ENCODE measurements at regions of chr16 and their contacts with region 1.

Region 1: DNA sequence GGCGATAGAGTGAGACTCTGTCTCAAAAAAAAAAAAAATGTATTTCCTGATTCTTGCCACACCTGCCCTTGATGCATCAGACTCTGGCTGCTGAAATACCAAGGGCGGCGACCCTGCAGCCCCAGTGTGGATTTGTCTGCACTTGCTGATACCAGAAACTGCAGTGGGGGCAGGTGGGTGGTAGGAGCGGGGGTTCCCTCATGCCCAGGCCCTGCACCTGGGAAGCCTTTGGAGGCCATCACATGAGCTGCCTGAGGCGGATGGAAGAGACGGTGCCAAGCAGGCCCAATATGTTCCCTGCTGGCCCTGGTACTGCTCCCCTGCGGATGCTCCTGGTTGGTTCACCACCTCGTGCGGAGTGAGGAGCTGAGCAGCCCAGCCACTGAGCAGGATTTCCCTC is 50.6 kb downstream of the MARF1 start:
- DNase-seq: peak in 3 of 5 donors; percentile 7 to 48 (median 23)
- H3K4me3 ChIP-seq: no peak overlapping the region
- H3K4me3 Mint-ChIP-seq: peak overlapping the region in 2 of 8 donors; percentile 6 to 26
- H3K27ac ChIP-seq: no peak overlapping the region
- H3K27ac Mint-ChIP-seq: peak overlapping the region; percentile 57 to 93 (median 79)
- H3K4me1 ChIP-seq: peaks cover 37% of the 10 kb centered on the region
- H3K4me1 Mint-ChIP-seq: peaks cover 16 to 58% (median 36%) of the 10 kb centered on the region in 4 donors
- H3K27me3 ChIP-seq: no peaks in the 10 kb centered on the region
- H3K27me3 Mint-ChIP-seq: no peaks in the 10 kb centered on the region

Region 2: DNA sequence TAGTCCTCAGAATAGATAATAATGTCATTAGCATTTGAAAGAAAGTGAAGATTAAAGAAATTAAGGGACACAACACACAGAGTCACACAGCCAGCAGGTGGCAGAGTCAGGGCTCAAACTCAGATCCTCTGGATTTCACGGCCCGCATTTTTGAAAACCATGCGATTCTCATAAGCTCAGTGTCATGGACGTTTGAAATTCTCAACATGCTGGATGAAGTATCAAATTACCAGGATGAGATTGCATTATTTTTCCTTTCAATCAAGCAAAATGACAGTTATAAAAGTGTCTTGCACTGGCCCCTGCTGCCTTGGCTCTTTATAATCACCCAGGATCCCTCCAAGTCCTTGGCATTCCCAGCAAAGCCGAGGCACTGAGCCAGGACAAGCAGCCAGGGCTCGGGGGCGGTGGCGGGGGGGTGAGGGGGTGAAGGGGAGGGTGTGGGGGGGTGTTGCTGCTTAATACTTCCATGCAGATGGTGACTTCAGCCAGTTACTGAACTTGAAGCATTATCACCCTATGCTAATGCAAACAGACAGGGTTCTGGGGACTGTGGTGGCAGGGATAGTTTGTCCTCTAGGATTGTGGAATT is 164.6 kb before region 1 on chr16:
- CTCF ChIA-PET with region 1: interaction called, 6 read pairs
- POLR2A ChIA-PET with region 1: no interaction called
- intact Hi-C with region 1: loop called (anchors 5 kb)
- DNase-seq: peak; percentile 27 to 53 (median 40)
- H3K4me3 ChIP-seq: no peak overlapping the region
- H3K4me3 Mint-ChIP-seq: no peak overlapping the region
- H3K27ac ChIP-seq: no peak overlapping the region
- H3K27ac Mint-ChIP-seq: peak overlapping the region in 1 of 7 donors; percentile 56
- H3K4me1 ChIP-seq: no peaks in the 10 kb centered on the region
- H3K4me1 Mint-ChIP-seq: peaks cover 0 to 3% (median under 1%) of the 10 kb centered on the region in 4 donors
- H3K27me3 ChIP-seq: no peaks in the 10 kb centered on the region
- H3K27me3 Mint-ChIP-seq: peaks cover 6 to 7% of the 10 kb centered on the region in 2 donors

Region 3: GRCh38 chr16:15523092-15523541 is 69.2 kb before region 1 on chr16:
- CTCF ChIA-PET with region 1: no interaction called
- POLR2A ChIA-PET with region 1: no interaction called
- intact Hi-C with region 1: loop called (anchors 10 kb)
- DNase-seq: peak in 1 of 5 donors; percentile 4
- H3K4me3 ChIP-seq: no peak overlapping the region
- H3K4me3 Mint-ChIP-seq: peak overlapping the region in 7 of 8 donors; percentile 41 to 78 (median 58)
- H3K27ac ChIP-seq: no peak overlapping the region
- H3K27ac Mint-ChIP-seq: peak overlapping the region in 5 of 7 donors; percentile 68 to 86 (median 84)
- H3K4me1 ChIP-seq: peaks cover 15% of the 10 kb centered on the region
- H3K4me1 Mint-ChIP-seq: peaks cover 10 to 19% (median 13%) of the 10 kb centered on the region in 4 donors
- H3K27me3 ChIP-seq: no peaks in the 10 kb centered on the region
- H3K27me3 Mint-ChIP-seq: no peaks in the 10 kb centered on the region

Region 4: DNA sequence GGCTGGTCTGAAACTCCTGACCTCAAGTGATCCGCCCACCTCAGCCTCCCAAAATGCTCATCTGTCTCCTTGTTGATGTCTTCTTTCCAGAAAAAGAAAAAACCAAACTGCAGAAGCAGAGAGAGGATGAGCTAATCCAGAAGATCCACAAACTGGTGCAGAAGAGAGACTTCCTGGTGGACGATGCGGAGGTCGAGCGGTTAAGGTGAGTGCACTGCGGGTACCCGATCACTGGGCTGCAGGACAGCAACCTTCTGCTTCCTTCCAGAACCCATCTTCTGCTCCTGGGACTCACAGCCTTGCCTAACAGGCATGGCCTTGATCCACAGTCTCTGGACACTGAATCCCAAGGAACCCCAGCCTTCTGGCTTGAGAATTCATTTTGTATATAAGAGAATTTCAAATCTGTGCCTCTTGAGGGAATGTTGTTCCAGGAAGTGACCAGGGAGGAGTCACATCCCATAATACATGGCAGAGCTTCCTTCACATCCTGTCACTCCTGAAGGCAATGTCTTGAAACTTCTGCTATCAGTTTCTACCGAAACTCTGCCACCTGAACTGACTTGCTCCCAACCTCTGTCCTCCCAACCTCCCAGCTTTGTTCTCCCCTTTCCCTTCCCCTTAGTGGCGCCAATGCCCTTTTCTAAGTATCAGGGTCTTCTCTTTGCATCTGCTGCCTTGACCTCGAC is 11.1 kb before region 1 on chr16:
- CTCF ChIA-PET with region 1: no interaction called
- POLR2A ChIA-PET with region 1: interaction called, 13 read pairs
- intact Hi-C with region 1: no loop called
- DNase-seq: no peak
- H3K4me3 ChIP-seq: no peak overlapping the region
- H3K4me3 Mint-ChIP-seq: no peak overlapping the region
- H3K27ac ChIP-seq: no peak overlapping the region
- H3K27ac Mint-ChIP-seq: peak overlapping the region in 4 of 7 donors; percentile 4 to 55 (median 18)
- H3K4me1 ChIP-seq: no peaks in the 10 kb centered on the region
- H3K4me1 Mint-ChIP-seq: peaks cover 0 to 6% (median 4%) of the 10 kb centered on the region in 4 donors
- H3K27me3 ChIP-seq: no peaks in the 10 kb centered on the region
- H3K27me3 Mint-ChIP-seq: no peaks in the 10 kb centered on the region

Region 5: GRCh38 chr16:15636392-15636873 is 44.1 kb after region 1 on chr16:
- CTCF ChIA-PET with region 1: interaction called, 14 read pairs
- POLR2A ChIA-PET with region 1: interaction called, 71 read pairs
- intact Hi-C with region 1: loop called (anchors 2 kb)
- DNase-seq: peak in 4 of 5 donors; percentile 29 to 45 (median 31)
- H3K4me3 ChIP-seq: no peak overlapping the region
- H3K4me3 Mint-ChIP-seq: peak overlapping the region; percentile 42 to 84 (median 76)
- H3K27ac ChIP-seq: peak overlapping the region; percentile 39
- H3K27ac Mint-ChIP-seq: peak overlapping the region; percentile 88 to 98 (median 93)
- H3K4me1 ChIP-seq: peaks cover 66% of the 10 kb centered on the region
- H3K4me1 Mint-ChIP-seq: peaks cover 39 to 84% (median 61%) of the 10 kb centered on the region in 4 donors
- H3K27me3 ChIP-seq: no peaks in the 10 kb centered on the region
- H3K27me3 Mint-ChIP-seq: no peaks in the 10 kb centered on the region

Region 6: DNA sequence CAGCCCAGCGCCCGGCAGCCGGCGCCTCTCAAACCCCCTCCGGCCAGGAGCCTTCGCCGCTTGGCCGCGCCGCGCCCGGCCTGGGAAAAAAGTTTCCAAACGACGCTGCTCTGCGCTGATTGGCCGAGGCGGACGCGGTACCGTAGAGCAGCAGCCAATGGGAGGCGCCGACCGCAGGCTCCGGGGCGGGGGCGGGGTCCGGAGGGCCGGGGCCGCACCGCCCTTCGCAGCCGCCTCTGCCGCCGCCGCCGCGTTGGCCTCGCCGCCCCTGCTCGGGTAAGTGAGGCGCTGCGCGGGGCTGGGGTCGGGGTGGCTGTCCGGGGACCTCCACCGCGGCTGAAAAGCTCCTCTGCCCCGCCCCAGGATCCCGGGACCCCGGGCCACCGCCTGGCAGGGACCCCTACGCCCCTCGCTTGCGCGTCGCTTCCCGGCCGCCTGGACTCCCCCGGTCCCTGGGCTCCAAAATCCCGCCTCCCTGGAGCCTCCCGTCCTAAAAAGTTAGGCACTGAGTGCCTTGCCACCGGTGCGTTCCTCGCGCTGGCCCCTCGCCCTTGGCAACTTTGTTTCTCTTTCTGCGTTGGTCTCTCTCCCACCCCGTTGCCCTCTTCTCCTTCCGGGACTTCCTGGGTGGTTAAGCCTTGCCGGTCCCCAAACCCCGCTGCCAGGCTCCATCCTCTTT is 57.8 kb after region 1 on chr16 and contains the start of gene NDE1:
- CTCF ChIA-PET with region 1: no interaction called
- POLR2A ChIA-PET with region 1: interaction called, 71 read pairs
- intact Hi-C with region 1: no loop called
- DNase-seq: peak; percentile 76 to 87 (median 79)
- H3K4me3 ChIP-seq: peak within 1 kb of the TSS; percentile 76 to 88
- H3K4me3 Mint-ChIP-seq: peak within 1 kb of the TSS; percentile 97 to 100 (median 99)
- H3K27ac ChIP-seq: peak within 1 kb of the TSS; percentile 98
- H3K27ac Mint-ChIP-seq: peak within 1 kb of the TSS; percentile 98 to 100 (median 99)
- H3K4me1 ChIP-seq: peaks cover 48% of the 10 kb centered on the region
- H3K4me1 Mint-ChIP-seq: peaks cover 19 to 43% (median 32%) of the 10 kb centered on the region in 4 donors
- H3K27me3 ChIP-seq: no peaks in the 10 kb centered on the region
- H3K27me3 Mint-ChIP-seq: no peaks in the 10 kb centered on the region
- total RNA-seq, gene NDE1: 124 to 128 TPM

Measured in CD4-positive, alpha-beta memory T cell (primary cell).